ENCODE measurements at regions of chr7 and their contacts with region 1.

Region 1: DNA sequence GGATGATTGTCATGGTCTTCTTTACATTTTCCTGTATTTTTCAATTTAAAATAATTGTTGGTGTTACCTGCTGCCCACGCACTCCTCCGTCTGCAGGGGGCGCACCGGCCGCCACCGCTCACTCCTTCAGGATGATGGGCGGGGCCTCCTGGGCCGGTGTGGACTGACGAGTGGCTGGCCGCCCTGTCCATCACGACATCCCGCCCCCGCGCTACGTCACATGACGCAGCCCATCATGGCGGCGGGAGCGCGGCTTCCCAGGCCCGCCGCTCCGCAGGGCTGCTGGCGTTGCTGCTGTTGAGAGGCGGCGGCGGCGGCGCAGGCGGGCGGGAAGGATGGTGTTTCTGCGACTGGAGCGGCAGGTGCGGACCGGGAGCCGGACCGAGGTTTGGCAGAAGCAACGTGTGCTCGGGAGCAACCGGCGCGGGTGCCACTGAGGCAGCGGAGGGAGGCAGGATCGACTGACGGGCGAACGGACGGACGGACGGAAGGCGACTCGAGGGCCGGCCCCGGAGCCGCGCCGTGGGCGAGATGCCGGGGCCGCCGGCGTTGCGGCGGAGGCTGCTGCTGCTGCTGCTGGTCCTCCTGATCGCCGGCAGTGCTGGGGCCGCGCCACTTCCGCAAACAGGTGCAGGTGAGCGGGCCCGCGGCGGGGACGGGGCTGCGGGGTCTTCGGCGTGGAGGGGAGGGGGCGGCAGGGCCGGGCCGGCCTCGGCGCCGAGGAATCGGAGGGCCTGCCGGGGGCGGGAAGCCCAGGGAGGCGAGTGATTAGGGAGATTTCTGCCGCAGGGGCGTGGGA is at the start of gene LMTK2:
- DNase-seq: peak; percentile 93 to 96
- ATAC-seq: peak; percentile 99 to 100 (median 100)
- H3K4me3 ChIP-seq: peak within 1 kb of the TSS; percentile 75 to 100 (median 97)
- H3K27ac ChIP-seq: peak within 1 kb of the TSS; percentile 81 to 93 (median 86)
- H3K4me1 ChIP-seq: peaks cover 6 to 46% (median 37%) of the 10 kb centered on the region in 9 donors
- H3K27me3 ChIP-seq: peaks cover 0 to 4% (median 0%) of the 10 kb centered on the region in 7 donors
- CTCF ChIP-seq: peak; percentile 92 to 99 (median 97)
- total RNA-seq, gene LMTK2: 15.9 to 50.2 (median 33.6) TPM

Region 2: GRCh38 chr7:98021588-98022351 is 85.1 kb before region 1 on chr7:
- intact Hi-C with region 1: loop called in 3 of 10 experiments (anchors 5 to 10 kb)
- DNase-seq: peak; percentile 64 to 80
- ATAC-seq: peak; percentile 59 to 90 (median 81)
- H3K4me3 ChIP-seq: no peak overlapping the region
- H3K27ac ChIP-seq: no peak overlapping the region
- H3K4me1 ChIP-seq: peaks cover 0 to 4% (median 0%) of the 10 kb centered on the region in 9 donors
- H3K27me3 ChIP-seq: peaks cover 0 to 27% (median 5%) of the 10 kb centered on the region in 7 donors
- CTCF ChIP-seq: peak; percentile 82 to 97 (median 92)

Region 3: GRCh38 chr7:98234429-98235147 is 127.7 kb after region 1 on chr7:
- intact Hi-C with region 1: no loop called
- DNase-seq: no peak
- ATAC-seq: no peak
- H3K4me3 ChIP-seq: no peak overlapping the region
- H3K27ac ChIP-seq: no peak overlapping the region
- H3K4me1 ChIP-seq: no peaks in the 10 kb centered on the region
- H3K27me3 ChIP-seq: no peaks in the 10 kb centered on the region
- CTCF ChIP-seq: no peak